HEK293T (cell line): ENCODE measurements at regions of chr2 and their contacts with region 1.

Region 1: DNA sequence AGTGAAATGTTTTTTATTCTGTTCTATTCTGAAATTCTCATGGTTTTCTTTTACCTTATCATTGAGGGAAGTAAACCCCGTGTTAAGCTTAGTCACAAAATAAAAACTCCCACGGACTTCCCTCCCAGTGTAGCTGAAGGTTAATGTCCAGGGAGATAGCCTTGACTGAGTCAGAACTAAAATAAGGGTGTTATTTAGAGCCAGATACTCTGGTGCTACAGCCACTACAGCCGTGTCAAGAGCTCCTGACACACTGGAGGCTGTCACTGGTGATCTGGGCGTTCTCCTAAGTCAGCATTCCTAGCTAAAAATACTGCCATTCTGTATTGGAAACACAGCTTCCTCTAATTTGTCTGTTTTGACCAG is 82.0 kb upstream of the RANBP2 start:
- DNase-seq: no peak

Region 2: DNA sequence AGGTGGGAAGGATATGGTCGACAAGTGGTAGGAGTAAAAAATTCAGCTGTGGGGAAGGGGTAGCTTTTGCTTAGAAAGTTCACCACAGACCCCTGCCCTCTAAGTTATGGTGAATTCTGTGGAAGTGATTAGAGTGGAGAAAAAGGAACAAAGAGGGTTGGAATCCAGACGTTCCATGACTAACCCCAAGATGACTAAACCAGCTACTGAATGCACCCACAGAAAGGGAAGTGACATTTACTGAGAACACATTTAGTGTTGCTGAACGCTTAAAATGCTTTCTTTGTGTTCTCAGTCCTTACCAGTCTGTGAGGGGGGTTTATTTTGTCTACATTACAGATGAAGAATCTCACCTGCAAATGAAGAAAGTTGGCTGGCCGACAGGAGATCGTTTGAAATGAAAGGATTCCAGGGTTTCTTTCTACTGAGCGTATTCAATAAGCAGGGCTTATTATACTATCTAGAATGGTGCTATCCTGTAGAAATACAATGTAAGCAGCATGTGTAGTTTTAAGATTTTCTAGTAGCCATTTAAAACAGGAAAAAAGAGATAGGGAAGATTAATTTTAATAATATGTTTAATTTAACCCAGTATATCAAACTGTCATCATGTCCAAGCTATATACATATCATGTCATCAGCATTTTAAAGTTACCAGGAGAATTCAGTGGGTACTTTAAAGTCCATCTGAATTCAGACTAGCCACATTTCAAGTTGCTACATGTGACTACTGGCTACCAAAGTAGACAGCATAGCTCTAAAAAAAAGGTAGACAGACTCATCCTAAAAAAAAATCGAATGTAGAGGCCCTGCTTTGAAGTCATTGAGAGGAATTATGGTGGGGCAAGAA is 42.9 kb before region 1 on chr2:
- CTCF ChIA-PET with region 1: interaction called, 13 read pairs
- POLR2A ChIA-PET with region 1: no interaction called
- DNase-seq: no peak

Region 3: GRCh38 chr2:108605947-108606346 is 31.3 kb before region 1 on chr2:
- CTCF ChIA-PET with region 1: interaction called, 85 read pairs
- POLR2A ChIA-PET with region 1: no interaction called
- DNase-seq: no peak

Region 4: DNA sequence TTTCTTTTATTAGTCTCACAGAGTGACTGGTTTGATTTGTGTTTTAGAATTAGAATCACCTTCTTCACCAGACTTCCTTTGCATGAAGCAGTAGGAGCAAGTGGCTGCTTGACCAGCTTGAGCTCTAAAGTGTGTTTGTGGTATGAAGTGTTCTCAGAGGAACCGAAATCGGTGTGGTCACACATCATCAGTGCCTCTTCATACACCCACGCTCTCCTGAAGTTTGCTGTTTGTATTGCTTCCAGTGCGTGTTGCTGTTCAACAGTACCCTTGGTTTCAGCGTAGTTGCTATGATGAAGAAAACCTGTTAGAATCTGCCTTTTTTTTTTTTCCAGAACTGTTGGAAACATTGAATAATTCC is 25.2 kb before region 1 on chr2:
- CTCF ChIA-PET with region 1: interaction called, 85 read pairs
- POLR2A ChIA-PET with region 1: interaction called, 4 read pairs
- DNase-seq: no peak

Region 5: GRCh38 chr2:108621087-108621559 is 16.2 kb before region 1 on chr2:
- CTCF ChIA-PET with region 1: interaction called, 85 read pairs
- POLR2A ChIA-PET with region 1: interaction called, 4 read pairs
- DNase-seq: peak; percentile 40